ENCODE measurements at regions of chr2 and their contacts with region 1.

Region 1: GRCh38 chr2:221517696-221518151 is 54.4 kb downstream of the EPHA4 start:
- DNase-seq: peak; percentile 84 to 93 (median 86)
- H3K4me3 ChIP-seq: peak overlapping the region in 1 of 2 donors; percentile 31
- H3K4me3 Mint-ChIP-seq: no peak overlapping the region
- H3K27ac ChIP-seq: peak overlapping the region; percentile 80
- H3K27ac Mint-ChIP-seq: no peak overlapping the region
- H3K4me1 ChIP-seq: peaks cover 66% of the 10 kb centered on the region
- H3K4me1 Mint-ChIP-seq: peaks cover 9 to 43% (median 30%) of the 10 kb centered on the region in 4 donors
- H3K27me3 ChIP-seq: no peaks in the 10 kb centered on the region
- H3K27me3 Mint-ChIP-seq: peaks cover 0 to 1% of the 10 kb centered on the region in 2 donors

Region 2: DNA sequence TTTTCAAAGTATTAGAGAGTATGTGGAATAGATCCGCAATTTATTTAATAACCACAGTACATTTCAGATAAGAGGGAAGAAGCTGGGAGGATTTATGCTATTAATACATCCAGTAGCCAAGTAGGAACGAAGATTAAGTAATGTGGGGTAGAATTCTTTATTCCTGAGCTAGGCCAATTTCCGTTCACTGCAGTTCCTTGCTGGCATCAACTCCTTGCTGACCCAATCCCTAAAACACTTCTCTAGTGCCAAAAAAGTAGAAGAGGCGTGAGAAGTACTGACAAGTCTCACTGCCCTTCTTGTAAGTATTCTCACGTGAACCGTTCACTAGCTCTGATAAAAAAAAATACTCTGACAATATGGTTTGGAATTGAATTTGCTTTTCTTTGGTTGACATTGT is 157.0 kb before region 1 on chr2:
- CTCF ChIA-PET with region 1: no interaction called
- POLR2A ChIA-PET with region 1: no interaction called
- intact Hi-C with region 1: no loop called
- DNase-seq: no peak
- H3K4me3 ChIP-seq: no peak overlapping the region
- H3K4me3 Mint-ChIP-seq: no peak overlapping the region
- H3K27ac ChIP-seq: no peak overlapping the region
- H3K27ac Mint-ChIP-seq: no peak overlapping the region
- H3K4me1 ChIP-seq: no peaks in the 10 kb centered on the region
- H3K4me1 Mint-ChIP-seq: peaks cover 0 to 1% (median under 1%) of the 10 kb centered on the region in 4 donors
- H3K27me3 ChIP-seq: no peaks in the 10 kb centered on the region
- H3K27me3 Mint-ChIP-seq: no peaks in the 10 kb centered on the region

Region 3: GRCh38 chr2:221465776-221466175 is 51.9 kb before region 1 on chr2:
- CTCF ChIA-PET with region 1: no interaction called
- POLR2A ChIA-PET with region 1: interaction called, 21 read pairs
- intact Hi-C with region 1: no loop called
- DNase-seq: peak in 3 of 5 donors; percentile 8 to 40 (median 10)
- H3K4me3 ChIP-seq: no peak overlapping the region
- H3K4me3 Mint-ChIP-seq: peak overlapping the region in 7 of 8 donors; percentile 13 to 67 (median 46)
- H3K27ac ChIP-seq: no peak overlapping the region
- H3K27ac Mint-ChIP-seq: peak overlapping the region in 6 of 7 donors; percentile 13 to 85 (median 76)
- H3K4me1 ChIP-seq: peaks cover 49% of the 10 kb centered on the region
- H3K4me1 Mint-ChIP-seq: peaks cover 53 to 87% (median 65%) of the 10 kb centered on the region in 4 donors
- H3K27me3 ChIP-seq: no peaks in the 10 kb centered on the region
- H3K27me3 Mint-ChIP-seq: no peaks in the 10 kb centered on the region

Region 4: GRCh38 chr2:221494560-221494959 is 23.2 kb before region 1 on chr2:
- CTCF ChIA-PET with region 1: interaction called, 23 read pairs
- POLR2A ChIA-PET with region 1: interaction called, 35 read pairs
- intact Hi-C with region 1: no loop called
- DNase-seq: no peak
- H3K4me3 ChIP-seq: no peak overlapping the region
- H3K4me3 Mint-ChIP-seq: no peak overlapping the region
- H3K27ac ChIP-seq: no peak overlapping the region
- H3K27ac Mint-ChIP-seq: peak overlapping the region in 2 of 7 donors; percentile 70 to 71
- H3K4me1 ChIP-seq: no peaks in the 10 kb centered on the region
- H3K4me1 Mint-ChIP-seq: peaks cover 9 to 13% (median 11%) of the 10 kb centered on the region in 4 donors
- H3K27me3 ChIP-seq: no peaks in the 10 kb centered on the region
- H3K27me3 Mint-ChIP-seq: no peaks in the 10 kb centered on the region

Region 5: GRCh38 chr2:221529943-221530652 is 12.4 kb after region 1 on chr2:
- CTCF ChIA-PET with region 1: interaction called, 26 read pairs
- POLR2A ChIA-PET with region 1: interaction called, 186 read pairs
- intact Hi-C with region 1: loop called (anchors 1 kb)
- DNase-seq: peak in 4 of 5 donors; percentile 26 to 40 (median 36)
- H3K4me3 ChIP-seq: peak overlapping the region; percentile 9 to 38
- H3K4me3 Mint-ChIP-seq: peak overlapping the region; percentile 66 to 83 (median 78)
- H3K27ac ChIP-seq: peak overlapping the region; percentile 33
- H3K27ac Mint-ChIP-seq: peak overlapping the region; percentile 84 to 96 (median 91)
- H3K4me1 ChIP-seq: peaks cover 69% of the 10 kb centered on the region
- H3K4me1 Mint-ChIP-seq: peaks cover 54 to 76% (median 68%) of the 10 kb centered on the region in 4 donors
- H3K27me3 ChIP-seq: no peaks in the 10 kb centered on the region
- H3K27me3 Mint-ChIP-seq: no peaks in the 10 kb centered on the region

Region 6: DNA sequence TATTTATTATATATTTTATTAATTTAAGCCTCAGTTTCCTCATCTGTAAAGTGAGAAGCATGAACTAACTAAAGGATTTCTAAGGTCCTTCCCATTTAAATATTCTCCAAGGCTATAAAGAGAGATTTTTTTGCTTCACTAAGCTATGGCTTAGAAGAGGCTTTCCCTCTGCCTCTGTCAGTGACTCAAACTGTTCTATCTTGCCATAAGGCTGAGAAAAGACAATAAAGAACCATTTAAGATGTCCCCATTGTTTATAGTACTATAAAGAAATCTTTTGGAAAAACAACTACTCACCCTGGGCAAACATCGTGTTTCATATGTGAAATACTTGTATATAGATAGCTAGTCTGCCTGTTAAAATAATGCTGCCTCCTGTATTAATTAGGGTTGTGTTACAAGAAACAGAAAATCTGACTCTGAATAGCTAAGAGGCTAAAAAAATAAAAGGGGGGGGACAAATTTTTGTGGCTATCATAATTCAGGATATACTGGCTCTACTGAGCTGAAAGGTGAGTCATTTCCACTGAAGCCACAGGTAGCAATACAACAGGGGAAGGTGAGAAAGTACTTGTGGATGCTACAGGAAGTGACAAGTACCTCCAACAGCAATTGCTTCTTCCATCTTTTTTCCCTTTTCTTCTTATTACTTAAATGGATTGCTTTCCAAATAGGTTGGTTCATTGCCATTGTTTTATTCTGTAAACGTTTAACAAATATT is 28.9 kb after region 1 on chr2:
- CTCF ChIA-PET with region 1: interaction called, 4 read pairs
- POLR2A ChIA-PET with region 1: interaction called, 28 read pairs
- intact Hi-C with region 1: no loop called
- DNase-seq: no peak
- H3K4me3 ChIP-seq: no peak overlapping the region
- H3K4me3 Mint-ChIP-seq: peak overlapping the region in 1 of 8 donors; percentile 7
- H3K27ac ChIP-seq: no peak overlapping the region
- H3K27ac Mint-ChIP-seq: peak overlapping the region in 4 of 7 donors; percentile 12 to 57 (median 28)
- H3K4me1 ChIP-seq: peaks cover 18% of the 10 kb centered on the region
- H3K4me1 Mint-ChIP-seq: peaks cover 29 to 40% (median 35%) of the 10 kb centered on the region in 4 donors
- H3K27me3 ChIP-seq: no peaks in the 10 kb centered on the region
- H3K27me3 Mint-ChIP-seq: no peaks in the 10 kb centered on the region

Region 7: GRCh38 chr2:221567809-221568208 is 50.1 kb after region 1 on chr2:
- CTCF ChIA-PET with region 1: interaction called, 15 read pairs
- POLR2A ChIA-PET with region 1: interaction called, 160 read pairs
- intact Hi-C with region 1: loop called (anchors 1 kb)
- DNase-seq: no peak
- H3K4me3 ChIP-seq: no peak overlapping the region
- H3K4me3 Mint-ChIP-seq: peak overlapping the region in 5 of 8 donors; percentile 2 to 97 (median 11)
- H3K27ac ChIP-seq: no peak overlapping the region
- H3K27ac Mint-ChIP-seq: peak overlapping the region in 4 of 7 donors; percentile 39 to 57 (median 48)
- H3K4me1 ChIP-seq: peaks cover 74% of the 10 kb centered on the region
- H3K4me1 Mint-ChIP-seq: peaks cover 57 to 90% (median 70%) of the 10 kb centered on the region in 4 donors
- H3K27me3 ChIP-seq: no peaks in the 10 kb centered on the region
- H3K27me3 Mint-ChIP-seq: peaks cover 0 to 3% of the 10 kb centered on the region in 2 donors

Region 8: DNA sequence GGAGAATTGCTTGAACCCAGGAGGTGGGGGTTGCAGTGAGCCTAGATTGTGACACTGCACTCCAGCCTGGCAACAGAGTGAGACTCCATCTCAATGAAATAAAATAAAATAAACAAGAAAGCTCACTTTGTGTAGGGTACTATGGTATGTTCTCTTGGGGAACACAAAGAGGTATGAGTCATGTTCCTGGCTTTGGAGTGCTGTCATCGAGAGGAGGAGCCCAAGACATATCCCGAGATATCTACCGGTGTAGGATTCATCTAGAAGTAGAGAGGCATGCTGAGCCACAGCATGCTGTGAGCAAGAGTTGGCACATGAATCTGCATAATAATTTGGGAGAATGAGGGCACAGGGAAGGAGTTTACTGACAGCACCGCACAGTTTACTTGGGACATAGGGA is 299.3 kb after region 1 on chr2:
- CTCF ChIA-PET with region 1: no interaction called
- POLR2A ChIA-PET with region 1: no interaction called
- intact Hi-C with region 1: no loop called
- DNase-seq: no peak
- H3K4me3 ChIP-seq: no peak overlapping the region
- H3K4me3 Mint-ChIP-seq: no peak overlapping the region
- H3K27ac ChIP-seq: no peak overlapping the region
- H3K27ac Mint-ChIP-seq: no peak overlapping the region
- H3K4me1 ChIP-seq: no peaks in the 10 kb centered on the region
- H3K4me1 Mint-ChIP-seq: no peaks in the 10 kb centered on the region
- H3K27me3 ChIP-seq: no peaks in the 10 kb centered on the region
- H3K27me3 Mint-ChIP-seq: peaks cover 0 to 3% of the 10 kb centered on the region in 2 donors

Region 9: GRCh38 chr2:222424729-222425671 is 907.3 kb after region 1 on chr2:
- CTCF ChIA-PET with region 1: no interaction called
- POLR2A ChIA-PET with region 1: no interaction called
- intact Hi-C with region 1: loop called (anchors 5 kb)
- DNase-seq: peak; percentile 36 to 75 (median 38)
- H3K4me3 ChIP-seq: peak overlapping the region; percentile 50 to 65
- H3K4me3 Mint-ChIP-seq: peak overlapping the region; percentile 92 to 97 (median 94)
- H3K27ac ChIP-seq: peak overlapping the region; percentile 58
- H3K27ac Mint-ChIP-seq: peak overlapping the region; percentile 86 to 97 (median 91)
- H3K4me1 ChIP-seq: peaks cover 44% of the 10 kb centered on the region
- H3K4me1 Mint-ChIP-seq: peaks cover 30 to 59% (median 47%) of the 10 kb centered on the region in 4 donors
- H3K27me3 ChIP-seq: no peaks in the 10 kb centered on the region
- H3K27me3 Mint-ChIP-seq: peaks cover 2 to 8% of the 10 kb centered on the region in 2 donors